OCI-LY7 (cell line): ENCODE measurements at regions of chr2 and their contacts with region 1.

Region 1: DNA sequence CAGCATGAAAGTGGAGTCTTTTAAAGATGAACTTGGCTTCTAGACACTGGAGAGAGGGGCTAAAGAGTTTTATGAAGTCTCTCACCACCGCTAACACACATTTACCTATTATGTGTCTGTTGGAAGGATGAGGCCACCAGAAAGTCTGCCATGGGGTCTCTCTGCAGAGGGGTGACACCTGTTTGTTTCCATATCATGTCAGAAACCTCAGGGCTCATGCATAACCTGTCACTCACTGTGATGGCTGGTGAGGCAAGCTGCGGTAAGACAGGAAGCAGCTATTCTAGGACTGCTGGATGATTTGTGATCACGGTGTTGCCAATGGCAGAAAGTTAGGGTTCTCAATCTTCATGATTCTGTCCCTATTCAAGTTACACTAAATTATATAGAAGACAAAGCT is 60.8 kb upstream of the DNMT3A start:
- DNase-seq: peak; percentile 96
- H3K4me3 ChIP-seq: peak overlapping the region; percentile 39
- H3K27ac ChIP-seq: peak overlapping the region; percentile 97
- H3K4me1 ChIP-seq: peaks cover 99% of the 10 kb centered on the region
- CTCF ChIP-seq: no peak

Region 2: GRCh38 chr2:25341011-25341727 is 61.3 kb before region 1 on chr2:
- CTCF ChIA-PET with region 1: no interaction called
- POLR2A ChIA-PET with region 1: no interaction called
- intact Hi-C with region 1: no loop called
- DNase-seq: peak; percentile 35
- H3K4me3 ChIP-seq: peak overlapping the region; percentile 61
- H3K27ac ChIP-seq: no peak overlapping the region
- H3K4me1 ChIP-seq: peaks cover 6% of the 10 kb centered on the region
- CTCF ChIP-seq: no peak

Region 3: DNA sequence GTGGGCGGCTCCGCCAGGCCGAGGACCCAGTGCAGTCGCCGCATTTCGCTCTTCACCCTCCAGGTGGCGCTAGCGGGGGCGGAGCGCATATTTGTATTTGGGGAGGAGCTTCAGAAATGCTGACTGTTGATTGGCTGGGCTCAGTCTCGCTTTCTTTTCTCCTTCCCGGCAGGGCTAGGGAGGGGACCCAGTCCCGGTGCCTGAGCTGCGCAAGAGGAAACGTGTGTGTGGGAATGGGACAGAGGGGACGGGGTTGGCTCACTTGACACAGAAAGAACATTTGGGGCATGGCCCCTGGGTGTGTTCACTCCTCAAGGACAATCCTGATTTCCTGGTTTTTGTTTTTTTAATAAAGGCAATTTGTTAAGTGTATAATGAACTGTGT is 40.4 kb before region 1 on chr2:
- CTCF ChIA-PET with region 1: interaction called, 3 read pairs
- POLR2A ChIA-PET with region 1: interaction called, 17 read pairs
- intact Hi-C with region 1: loop called (anchors 1 kb)
- DNase-seq: peak; percentile 93
- H3K4me3 ChIP-seq: peak overlapping the region; percentile 66
- H3K27ac ChIP-seq: peak overlapping the region; percentile 66
- H3K4me1 ChIP-seq: peaks cover 23% of the 10 kb centered on the region
- CTCF ChIP-seq: peak; percentile 95

Region 4: GRCh38 chr2:25376750-25377621 is 25.5 kb before region 1 on chr2:
- CTCF ChIA-PET with region 1: interaction called, 3 read pairs
- POLR2A ChIA-PET with region 1: interaction called, 13 read pairs
- intact Hi-C with region 1: loop called (anchors 1 kb)
- DNase-seq: peak; percentile 98
- H3K4me3 ChIP-seq: peak overlapping the region; percentile 31
- H3K27ac ChIP-seq: peak overlapping the region; percentile 82
- H3K4me1 ChIP-seq: peaks cover 61% of the 10 kb centered on the region
- CTCF ChIP-seq: peak; percentile 97

Region 5: GRCh38 chr2:25483601-25484266 is 81.3 kb after region 1 on chr2:
- CTCF ChIA-PET with region 1: no interaction called
- POLR2A ChIA-PET with region 1: no interaction called
- intact Hi-C with region 1: loop called (anchors 1 kb)
- DNase-seq: peak; percentile 79
- H3K4me3 ChIP-seq: peak overlapping the region; percentile 12
- H3K27ac ChIP-seq: peak overlapping the region; percentile 69
- H3K4me1 ChIP-seq: peaks cover 45% of the 10 kb centered on the region
- CTCF ChIP-seq: no peak